Transverse colon (tissue), 4 donors: ENCODE measurements at regions of chr1 and their contacts with region 1.

Region 1: DNA sequence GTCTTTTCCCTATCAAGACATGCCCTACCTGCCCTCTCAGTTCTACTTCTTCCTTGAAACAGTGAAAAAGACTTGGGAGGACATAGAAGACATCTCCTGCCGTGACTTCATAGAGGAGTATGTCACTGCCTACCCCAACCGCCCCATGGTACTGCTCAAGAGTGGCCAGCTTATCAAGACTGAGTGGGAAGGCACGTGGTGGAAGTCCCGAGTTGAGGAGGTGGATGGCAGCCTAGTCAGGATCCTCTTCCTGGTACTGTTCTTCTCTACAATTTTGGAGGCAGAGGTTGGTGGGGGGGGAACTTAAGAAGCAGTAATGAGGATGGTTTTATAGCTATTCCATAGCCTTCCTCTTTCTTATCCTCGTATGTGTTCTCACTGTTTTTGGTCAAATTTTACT is 18.7 kb downstream of the SETDB1 start:
- DNase-seq: no peak
- H3K4me3 ChIP-seq: no peak overlapping the region
- H3K27ac ChIP-seq: no peak overlapping the region
- H3K4me1 ChIP-seq: no peaks in the 10 kb centered on the region
- H3K27me3 ChIP-seq: no peaks in the 10 kb centered on the region
- CTCF ChIP-seq: no peak
- EP300 ChIP-seq: no peak
- POLR2A ChIP-seq: no peak

Region 2: DNA sequence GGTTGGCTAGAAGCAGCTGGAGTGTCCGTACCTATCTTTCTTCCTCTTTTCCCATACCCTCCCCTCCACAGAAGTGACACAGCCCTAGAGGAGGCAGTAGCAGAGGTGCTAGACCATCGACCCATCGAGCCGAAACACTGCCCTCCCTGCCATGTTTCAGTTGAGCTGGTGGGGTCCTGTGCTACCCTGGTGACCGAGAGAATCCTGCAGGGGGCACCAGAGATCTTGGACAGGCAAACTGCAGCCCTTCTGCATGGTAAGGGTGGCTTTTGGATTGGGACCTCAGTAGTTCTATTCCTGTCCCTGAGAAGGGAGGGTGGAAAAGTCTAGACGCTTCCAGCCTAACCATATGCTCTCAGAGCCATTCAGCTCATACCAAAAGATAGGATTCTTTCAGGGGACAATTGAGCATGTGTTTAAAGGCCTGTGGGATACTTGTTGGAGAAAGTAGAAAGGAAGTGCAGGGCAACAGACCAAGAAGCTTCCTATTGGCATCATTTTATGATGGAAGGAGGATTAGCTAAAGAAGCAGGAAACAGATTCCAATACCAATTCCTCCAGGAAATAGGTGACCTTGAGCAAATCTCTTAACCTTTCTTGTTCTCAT is 79.8 kb after region 1 on chr1:
- in situ Hi-C with region 1: no loop called
- intact Hi-C with region 1: no loop called
- DNase-seq: peak; percentile 85
- H3K4me3 ChIP-seq: no peak overlapping the region
- H3K27ac ChIP-seq: peak overlapping the region in 2 of 4 donors; percentile 13 to 52
- H3K4me1 ChIP-seq: peaks cover 0 to 8% (median 0%) of the 10 kb centered on the region in 4 donors
- H3K27me3 ChIP-seq: no peaks in the 10 kb centered on the region
- CTCF ChIP-seq: peak; percentile 70 to 75 (median 72)
- EP300 ChIP-seq: no peak
- POLR2A ChIP-seq: no peak

Region 3: GRCh38 chr1:151085953-151086559 is 141.2 kb after region 1 on chr1:
- in situ Hi-C with region 1: no loop called
- intact Hi-C with region 1: loop called (anchors 5 kb)
- DNase-seq: no peak
- H3K4me3 ChIP-seq: no peak overlapping the region
- H3K27ac ChIP-seq: no peak overlapping the region
- H3K4me1 ChIP-seq: no peaks in the 10 kb centered on the region
- H3K27me3 ChIP-seq: no peaks in the 10 kb centered on the region
- CTCF ChIP-seq: no peak
- EP300 ChIP-seq: no peak
- POLR2A ChIP-seq: no peak